Gastrocnemius medialis (tissue), 4 donors: ENCODE measurements at regions of chr6 and their contacts with region 1.

Region 1: DNA sequence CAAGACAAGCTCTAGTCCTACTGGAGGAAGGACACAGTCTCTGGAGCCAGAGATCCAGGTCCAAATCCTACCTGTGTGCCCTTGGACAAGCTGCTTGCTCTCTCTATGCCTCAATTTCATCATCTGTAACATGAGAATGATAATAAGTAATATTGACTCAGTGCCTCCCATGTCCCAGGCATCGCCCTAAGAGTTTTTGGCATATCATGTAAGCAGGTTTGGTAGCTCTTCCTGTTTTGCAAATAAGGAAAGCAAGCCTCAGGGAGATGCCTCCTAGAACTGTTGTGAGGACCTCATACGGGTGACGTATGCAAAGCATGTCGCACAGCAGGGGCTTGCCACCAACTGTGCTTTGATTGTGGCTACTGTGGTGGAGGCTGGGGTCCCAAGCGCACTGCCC is 61.8 kb upstream of the LRFN2 start:
- DNase-seq: no peak
- ATAC-seq: no peak
- H3K4me3 ChIP-seq: no peak overlapping the region
- H3K27ac ChIP-seq: no peak overlapping the region
- H3K4me1 ChIP-seq: no peaks in the 10 kb centered on the region
- H3K27me3 ChIP-seq: no peaks in the 10 kb centered on the region
- CTCF ChIP-seq: no peak
- POLR2A ChIP-seq: no peak

Region 2: GRCh38 chr6:39610221-39610620 is 1038.7 kb before region 1 on chr6:
- in situ Hi-C with region 1: no loop called
- intact Hi-C with region 1: no loop called
- DNase-seq: no peak
- ATAC-seq: no peak
- H3K4me3 ChIP-seq: no peak overlapping the region
- H3K27ac ChIP-seq: no peak overlapping the region
- H3K4me1 ChIP-seq: no peaks in the 10 kb centered on the region
- H3K27me3 ChIP-seq: no peaks in the 10 kb centered on the region
- CTCF ChIP-seq: no peak
- POLR2A ChIP-seq: no peak

Region 3: GRCh38 chr6:40719671-40720374 is 70.9 kb after region 1 on chr6:
- in situ Hi-C with region 1: no loop called
- intact Hi-C with region 1: loop called (anchors 2 kb)
- DNase-seq: no peak
- ATAC-seq: no peak
- H3K4me3 ChIP-seq: no peak overlapping the region
- H3K27ac ChIP-seq: peak overlapping the region in 2 of 4 donors; percentile 22 to 45
- H3K4me1 ChIP-seq: no peaks in the 10 kb centered on the region
- H3K27me3 ChIP-seq: no peaks in the 10 kb centered on the region
- CTCF ChIP-seq: no peak
- POLR2A ChIP-seq: no peak